ENCODE measurements at regions of chr2 and their contacts with region 1.

Region 1: DNA sequence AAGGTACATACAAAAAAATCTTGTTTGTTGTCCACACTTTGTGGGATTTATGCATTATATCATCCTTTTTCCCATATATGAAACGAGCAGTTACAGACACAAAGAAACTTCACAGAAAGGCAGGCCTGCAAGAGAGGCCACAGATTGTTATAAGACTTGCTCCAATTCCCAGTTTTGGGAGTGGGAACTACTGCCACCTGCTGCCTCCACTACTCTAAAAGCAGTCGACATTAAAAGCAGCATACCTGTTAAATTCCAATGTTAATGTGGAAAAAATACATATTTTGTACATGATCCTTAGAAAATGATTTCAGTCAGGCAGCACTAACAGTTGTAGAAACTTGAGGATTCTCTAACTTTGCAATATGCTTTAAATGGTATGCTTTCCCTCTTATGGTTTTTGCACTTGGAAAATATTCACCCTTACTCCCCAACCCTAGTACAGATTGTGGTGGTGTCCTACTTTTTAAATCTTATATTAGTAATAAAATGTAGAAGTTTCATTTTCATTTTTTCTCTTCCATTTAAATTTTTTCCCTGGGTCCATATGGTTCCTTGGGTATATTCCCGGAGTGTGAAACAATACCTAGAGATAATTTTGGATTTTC is 37.9 kb downstream of the SLC38A11 start:
- DNase-seq: no peak

Region 2: DNA sequence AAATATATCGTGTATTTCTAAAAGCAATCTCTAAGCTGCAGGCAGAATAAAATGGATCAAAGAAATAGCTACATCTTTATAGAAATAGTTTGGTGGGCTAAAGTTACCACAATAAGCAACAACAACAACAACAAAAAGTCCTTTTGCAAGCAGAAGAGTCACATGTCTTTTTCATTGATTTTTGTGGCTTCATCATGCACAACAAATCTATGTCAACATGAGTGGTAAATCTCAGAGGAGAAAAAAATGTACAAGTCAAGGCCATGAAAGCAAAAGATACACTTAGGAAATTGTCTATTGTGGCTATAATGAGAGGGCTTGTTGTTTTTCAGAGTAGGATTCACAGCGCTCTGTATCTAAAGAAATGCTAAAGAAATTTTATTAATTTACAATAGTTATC is 565.9 kb before region 1 on chr2:
- intact Hi-C with region 1: no loop called
- DNase-seq: no peak

Region 3: DNA sequence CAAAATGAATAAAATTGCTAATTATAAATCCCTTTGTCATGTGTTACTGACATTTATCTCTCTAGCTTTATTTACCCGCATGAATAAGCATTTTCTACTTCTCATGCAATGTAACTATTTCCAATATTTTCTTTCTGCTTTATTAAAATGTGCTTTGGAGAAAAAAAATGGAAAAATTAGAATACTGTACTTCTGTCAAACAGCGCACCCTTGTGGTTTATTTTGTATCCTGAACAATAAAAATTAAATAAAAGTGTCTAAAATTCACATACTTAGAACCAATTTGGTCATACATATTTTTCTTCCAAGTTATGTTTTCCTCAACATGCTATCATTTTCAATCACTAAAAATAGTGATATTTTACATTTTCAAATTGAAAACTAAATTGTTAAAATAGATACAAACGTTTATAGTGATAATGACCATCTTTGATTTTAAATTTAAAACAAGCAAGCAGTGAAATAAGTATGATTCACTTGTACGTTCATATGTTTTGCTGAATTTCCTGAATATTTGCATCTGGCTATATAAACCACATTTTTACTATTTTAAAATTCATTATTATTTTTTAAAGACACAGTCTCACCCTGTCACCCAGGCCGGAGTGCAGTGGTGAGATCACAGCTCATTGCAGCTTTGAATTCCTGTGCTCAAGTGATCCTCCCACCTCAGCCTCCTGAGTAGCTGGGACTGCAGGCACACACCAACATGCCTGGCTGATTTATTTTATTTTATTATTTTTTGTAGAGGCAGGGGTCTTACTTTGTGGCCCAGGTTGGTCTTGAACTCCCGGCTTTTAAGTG is 200.2 kb before region 1 on chr2:
- intact Hi-C with region 1: loop called in 1 of 2 experiments (anchors 10 kb)
- DNase-seq: no peak

Region 4: GRCh38 chr2:164835302-164835701 is 82.1 kb before region 1 on chr2:
- intact Hi-C with region 1: no loop called
- DNase-seq: no peak

Region 5: GRCh38 chr2:166661391-166661790 is 1744.0 kb after region 1 on chr2:
- intact Hi-C with region 1: no loop called
- DNase-seq: no peak